Breast epithelium (tissue), 4 donors: ENCODE measurements at regions of chr2 and their contacts with region 1.

Region 1: GRCh38 chr2:117470311-117471095 is 344.0 kb upstream of the DDX18 start:
- DNase-seq: no peak
- H3K4me3 ChIP-seq: no peak overlapping the region
- H3K27ac ChIP-seq: no peak overlapping the region
- H3K4me1 ChIP-seq: no peaks in the 10 kb centered on the region
- H3K27me3 ChIP-seq: no peaks in the 10 kb centered on the region
- CTCF ChIP-seq: peak in 2 of 3 donors; percentile 21 to 23
- POLR2A ChIP-seq: no peak

Region 2: GRCh38 chr2:116979916-116980753 is 490.4 kb before region 1 on chr2:
- intact Hi-C with region 1: loop called (anchors 5 kb)
- DNase-seq: no peak
- H3K4me3 ChIP-seq: no peak overlapping the region
- H3K27ac ChIP-seq: no peak overlapping the region
- H3K4me1 ChIP-seq: no peaks in the 10 kb centered on the region
- H3K27me3 ChIP-seq: no peaks in the 10 kb centered on the region
- CTCF ChIP-seq: no peak
- POLR2A ChIP-seq: no peak

Region 3: GRCh38 chr2:118443596-118443995 is 973.1 kb after region 1 on chr2:
- intact Hi-C with region 1: no loop called
- DNase-seq: no peak
- H3K4me3 ChIP-seq: no peak overlapping the region
- H3K27ac ChIP-seq: no peak overlapping the region
- H3K4me1 ChIP-seq: no peaks in the 10 kb centered on the region
- H3K27me3 ChIP-seq: peaks cover 0 to 9% of the 10 kb centered on the region in 2 donors
- CTCF ChIP-seq: no peak
- POLR2A ChIP-seq: no peak